Activated CD4-positive, alpha-beta T cell treated with anti-CD3 and anti-CD28 coated beads, Interleukin-2, amount 10 ng/mL, durations not matched to agents 7 days and 5 days (primary cell): ENCODE measurements at regions of chr14 and their contacts with region 1.

Region 1: DNA sequence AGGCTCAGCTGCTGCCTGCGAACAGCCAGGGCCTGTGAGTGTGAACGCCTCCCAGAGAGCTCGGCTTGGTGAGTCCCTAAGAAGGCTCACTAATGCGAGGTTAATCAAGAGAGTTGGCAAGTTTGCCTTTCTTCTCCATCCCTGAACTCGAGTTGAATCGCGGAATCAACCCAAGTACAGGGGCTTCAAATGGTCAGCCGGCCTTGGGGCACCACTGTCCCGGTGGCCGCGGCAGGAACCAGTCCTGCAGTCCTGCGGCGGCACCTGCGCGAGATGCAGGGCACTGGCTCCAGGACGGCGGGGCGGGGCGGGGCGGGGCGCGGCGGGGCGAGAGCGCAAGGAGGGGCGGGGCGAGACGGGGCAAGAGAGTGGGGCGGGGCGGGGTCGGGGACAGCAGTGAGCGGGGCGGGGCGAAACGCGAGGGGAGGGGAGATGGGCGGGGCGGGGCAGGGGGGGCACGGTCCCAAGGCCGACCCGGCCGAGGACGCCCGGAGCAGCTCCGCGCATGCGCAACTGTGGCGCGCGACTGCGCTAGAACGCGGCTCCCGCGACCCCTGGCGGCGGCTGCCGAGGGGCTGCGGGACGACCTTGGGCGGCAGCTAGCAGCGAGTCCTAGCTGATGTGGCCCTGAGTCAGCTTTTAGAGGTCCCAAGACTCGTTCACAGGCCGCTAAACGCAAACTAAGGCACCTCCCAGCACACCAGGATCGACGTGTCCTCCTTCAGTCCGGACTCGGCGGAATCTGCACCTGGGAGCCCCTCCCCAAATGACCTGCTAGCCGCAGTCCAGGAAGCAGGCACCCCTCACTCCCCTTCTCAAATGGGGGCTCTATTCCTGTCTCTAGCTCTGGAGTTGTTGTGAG is 58.0 kb downstream of the TTC7B start:
- DNase-seq: peak; percentile 92
- H3K4me3 Mint-ChIP-seq: peak overlapping the region; percentile 71
- H3K27ac Mint-ChIP-seq: peak overlapping the region; percentile 88
- H3K4me1 Mint-ChIP-seq: peaks cover 17% of the 10 kb centered on the region
- H3K27me3 Mint-ChIP-seq: peaks cover 24% of the 10 kb centered on the region

Region 2: DNA sequence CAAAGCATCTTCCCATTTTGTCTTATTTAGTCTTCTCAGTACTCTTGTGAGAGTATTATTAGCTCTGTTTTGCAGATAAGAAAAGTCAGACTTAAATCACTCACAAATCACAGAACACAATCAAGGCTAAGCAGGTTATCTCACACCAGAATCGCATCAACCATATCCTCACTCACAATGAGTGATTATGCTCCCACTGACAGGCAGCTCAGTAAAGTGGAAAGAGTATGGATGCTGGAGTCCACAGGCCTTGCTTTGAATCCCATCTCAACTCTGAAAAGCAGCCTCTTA is 14.9 kb after region 1 on chr14:
- CTCF ChIA-PET with region 1: interaction called, 37 read pairs
- POLR2A ChIA-PET with region 1: no interaction called
- DNase-seq: no peak
- H3K4me3 Mint-ChIP-seq: no peak overlapping the region
- H3K27ac Mint-ChIP-seq: no peak overlapping the region
- H3K4me1 Mint-ChIP-seq: no peaks in the 10 kb centered on the region
- H3K27me3 Mint-ChIP-seq: no peaks in the 10 kb centered on the region

Region 3: GRCh38 chr14:90781344-90781761 is 23.1 kb after region 1 on chr14:
- CTCF ChIA-PET with region 1: interaction called, 15 read pairs
- POLR2A ChIA-PET with region 1: no interaction called
- DNase-seq: no peak
- H3K4me3 Mint-ChIP-seq: no peak overlapping the region
- H3K27ac Mint-ChIP-seq: no peak overlapping the region
- H3K4me1 Mint-ChIP-seq: no peaks in the 10 kb centered on the region
- H3K27me3 Mint-ChIP-seq: no peaks in the 10 kb centered on the region

Region 4: GRCh38 chr14:90995785-90996184 is 237.5 kb after region 1 on chr14:
- CTCF ChIA-PET with region 1: no interaction called
- POLR2A ChIA-PET with region 1: no interaction called
- DNase-seq: no peak
- H3K4me3 Mint-ChIP-seq: no peak overlapping the region
- H3K27ac Mint-ChIP-seq: no peak overlapping the region
- H3K4me1 Mint-ChIP-seq: peaks cover 35% of the 10 kb centered on the region
- H3K27me3 Mint-ChIP-seq: no peaks in the 10 kb centered on the region